ENCODE measurements at regions of chr6 and their contacts with region 1.

Region 1: DNA sequence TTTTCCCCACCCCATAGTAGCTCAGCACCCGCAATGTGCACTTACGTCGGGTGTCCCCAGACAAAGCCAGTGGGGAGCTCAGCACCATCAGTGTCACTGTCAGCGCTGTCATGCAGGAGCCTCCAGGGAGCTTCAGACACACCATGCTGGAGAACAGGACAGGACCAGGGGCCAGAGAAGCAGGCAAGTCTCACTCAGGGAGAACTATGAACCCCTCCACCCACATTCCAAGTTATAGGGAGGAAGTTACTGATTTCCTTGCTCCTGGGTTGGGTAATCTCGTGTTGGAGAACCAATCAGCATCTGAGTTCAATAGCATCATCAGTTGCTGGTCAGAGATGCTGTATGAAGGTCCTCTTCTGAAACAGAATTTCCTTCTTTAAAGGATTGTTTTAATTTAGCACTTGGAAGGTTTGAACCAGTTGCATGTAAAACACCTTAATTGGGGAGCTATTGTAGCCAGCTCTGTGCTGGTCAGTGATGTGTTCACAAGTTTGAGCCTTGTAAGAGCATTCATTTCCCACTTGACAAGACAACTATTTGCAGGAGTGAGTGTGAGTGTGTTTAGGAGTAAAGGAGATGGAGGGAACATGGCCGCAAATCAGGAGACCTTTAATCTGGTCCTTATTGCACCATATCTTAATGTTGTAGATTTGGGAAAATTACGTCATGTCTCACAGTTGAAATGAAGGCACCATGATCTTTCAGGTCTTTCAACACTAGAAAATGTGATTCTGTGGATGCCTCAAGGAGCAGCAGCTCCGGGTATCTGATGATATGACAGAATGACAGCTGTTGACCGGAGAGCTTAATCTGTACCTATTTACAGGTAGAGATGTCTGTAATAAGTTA is at the start of gene HLA-DRB1:
- DNase-seq: no peak
- H3K4me3 ChIP-seq: no peak within 1 kb of the TSS
- H3K27ac ChIP-seq: no peak within 1 kb of the TSS
- H3K4me1 ChIP-seq: no peaks in the 10 kb centered on the region
- H3K27me3 ChIP-seq: no peaks in the 10 kb centered on the region
- CTCF ChIP-seq: no peak

Region 2: DNA sequence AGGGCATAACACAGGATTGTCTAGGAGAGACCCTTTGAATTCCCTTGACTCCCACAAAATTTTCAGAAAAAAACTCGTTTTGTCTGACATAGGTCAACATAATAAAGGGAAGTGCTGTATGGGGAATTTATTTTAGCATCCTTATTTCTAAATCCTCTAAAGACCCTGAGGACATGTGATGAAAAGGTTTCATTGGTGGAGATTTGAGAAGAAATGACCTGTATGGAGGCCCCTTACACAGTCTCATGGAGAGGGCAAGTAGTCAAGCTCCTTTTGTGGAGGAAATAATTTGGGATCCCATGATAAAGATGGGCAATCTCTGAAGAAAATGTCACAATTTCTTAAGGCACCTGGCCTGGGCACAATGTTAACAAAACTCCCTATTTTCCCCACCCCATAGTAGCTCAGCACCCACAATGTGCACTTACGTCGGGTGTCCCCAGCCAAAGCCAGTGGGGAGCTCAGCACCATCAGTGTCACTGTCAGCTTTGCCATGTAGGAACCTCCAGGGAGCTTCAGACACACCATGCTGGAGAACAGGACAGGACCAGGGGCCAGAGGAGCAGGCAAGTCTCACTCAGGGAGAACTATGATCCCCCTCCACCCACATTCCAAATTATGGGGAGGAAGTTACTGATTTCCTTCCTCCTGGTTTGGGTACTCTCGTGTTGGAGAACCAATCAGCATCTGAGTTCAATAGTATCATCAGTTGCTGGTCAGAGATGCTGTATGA is 60.0 kb before region 1 on chr6 and contains the start of gene HLA-DRB5:
- intact Hi-C with region 1: loop called (anchors 10 kb)
- DNase-seq: peak; percentile 20 to 35
- H3K4me3 ChIP-seq: no peak within 1 kb of the TSS
- H3K27ac ChIP-seq: no peak within 1 kb of the TSS
- H3K4me1 ChIP-seq: no peaks in the 10 kb centered on the region
- H3K27me3 ChIP-seq: no peaks in the 10 kb centered on the region
- CTCF ChIP-seq: no peak

Region 3: DNA sequence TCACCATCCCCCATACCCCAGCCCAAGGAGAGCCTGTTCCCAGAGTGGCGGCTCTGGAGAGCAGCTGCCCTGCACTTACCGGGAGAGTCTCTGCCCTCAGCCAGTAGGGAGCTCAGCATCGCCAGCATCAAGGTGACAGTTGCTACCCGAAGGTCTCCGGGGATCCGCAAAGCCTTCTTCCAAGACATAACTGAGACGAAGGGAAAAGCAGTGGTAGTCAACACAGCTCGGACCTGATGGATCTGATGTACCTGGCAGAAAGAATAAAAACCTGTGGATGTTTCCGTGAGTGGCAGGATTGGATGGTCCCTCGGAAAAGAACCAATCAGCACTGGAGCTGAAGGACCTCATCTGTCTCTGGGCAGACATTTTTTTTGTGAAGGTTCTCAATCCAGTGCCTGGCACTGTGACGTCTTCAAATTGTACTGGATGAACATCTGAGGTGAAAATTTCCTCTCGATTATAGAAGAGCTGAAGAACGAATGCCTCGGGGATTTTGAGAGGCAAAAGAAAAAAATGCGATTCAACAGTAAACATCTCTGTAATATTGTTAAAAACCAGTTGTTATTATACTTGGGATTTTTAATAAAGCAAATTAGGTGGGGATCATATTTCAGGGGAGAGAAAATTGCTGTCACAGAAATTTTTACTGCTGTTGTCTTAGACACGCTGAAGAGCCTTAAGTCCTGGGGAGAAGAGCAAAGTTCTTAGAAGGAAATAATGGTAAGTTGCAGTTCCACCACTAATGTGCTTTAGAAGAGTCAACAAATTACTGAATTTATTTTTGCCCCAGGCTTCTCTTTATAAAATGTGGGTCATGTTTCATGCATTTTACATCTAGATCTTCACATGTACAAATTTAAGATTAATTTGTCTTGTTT is 76.8 kb after region 1 on chr6 and contains the start of gene HLA-DQB1:
- intact Hi-C with region 1: no loop called
- DNase-seq: peak in 1 of 2 donors; percentile 30
- H3K4me3 ChIP-seq: no peak within 1 kb of the TSS
- H3K27ac ChIP-seq: no peak within 1 kb of the TSS
- H3K4me1 ChIP-seq: no peaks in the 10 kb centered on the region
- H3K27me3 ChIP-seq: no peaks in the 10 kb centered on the region
- CTCF ChIP-seq: no peak

Measured in tibial artery (tissue), 4 donors.